Activated T-helper 1 cell treated with anti-CD3 and anti-CD28 coated beads, Interleukin-12 subunit alpha, Interleukin-12 subunit beta, Interleukin-2, Interleukin-4 antibody, amounts not matched to agents 30 ng/mL and 10 ng/mL and 1 ng/mL, durations not matched to agents 14 hours and 24 hours and 36 hours (primary cell): ENCODE measurements at regions of chr14 and their contacts with region 1.

Region 1: GRCh38 chr14:57066887-57067513 is 201.7 kb downstream of the EXOC5 start:
- DNase-seq: no peak
- H3K4me3 Mint-ChIP-seq: no peak overlapping the region
- H3K27ac Mint-ChIP-seq: no peak overlapping the region
- H3K4me1 Mint-ChIP-seq: peaks cover 7% of the 10 kb centered on the region
- H3K27me3 Mint-ChIP-seq: peaks cover 55% of the 10 kb centered on the region

Region 2: GRCh38 chr14:56129933-56130332 is 937.1 kb before region 1 on chr14:
- intact Hi-C with region 1: loop called (anchors 10 kb)
- DNase-seq: no peak
- H3K4me3 Mint-ChIP-seq: no peak overlapping the region
- H3K27ac Mint-ChIP-seq: no peak overlapping the region
- H3K4me1 Mint-ChIP-seq: peaks cover 19% of the 10 kb centered on the region
- H3K27me3 Mint-ChIP-seq: peaks cover under 1% of the 10 kb centered on the region

Region 3: GRCh38 chr14:56491299-56492285 is 575.4 kb before region 1 on chr14:
- intact Hi-C with region 1: loop called (anchors 1 kb)
- DNase-seq: peak; percentile 2
- H3K4me3 Mint-ChIP-seq: no peak overlapping the region
- H3K27ac Mint-ChIP-seq: no peak overlapping the region
- H3K4me1 Mint-ChIP-seq: peaks cover 7% of the 10 kb centered on the region
- H3K27me3 Mint-ChIP-seq: no peaks in the 10 kb centered on the region

Region 4: GRCh38 chr14:56810836-56811592 is 256.0 kb before region 1 on chr14:
- intact Hi-C with region 1: loop called (anchors 5 kb)
- DNase-seq: no peak
- H3K4me3 Mint-ChIP-seq: no peak overlapping the region
- H3K27ac Mint-ChIP-seq: peak overlapping the region; percentile 84
- H3K4me1 Mint-ChIP-seq: peaks cover 17% of the 10 kb centered on the region
- H3K27me3 Mint-ChIP-seq: peaks cover 80% of the 10 kb centered on the region

Region 5: GRCh38 chr14:57078054-57078453 is 11.1 kb after region 1 on chr14:
- intact Hi-C with region 1: no loop called
- DNase-seq: no peak
- H3K4me3 Mint-ChIP-seq: no peak overlapping the region
- H3K27ac Mint-ChIP-seq: no peak overlapping the region
- H3K4me1 Mint-ChIP-seq: no peaks in the 10 kb centered on the region
- H3K27me3 Mint-ChIP-seq: peaks cover 20% of the 10 kb centered on the region

Region 6: DNA sequence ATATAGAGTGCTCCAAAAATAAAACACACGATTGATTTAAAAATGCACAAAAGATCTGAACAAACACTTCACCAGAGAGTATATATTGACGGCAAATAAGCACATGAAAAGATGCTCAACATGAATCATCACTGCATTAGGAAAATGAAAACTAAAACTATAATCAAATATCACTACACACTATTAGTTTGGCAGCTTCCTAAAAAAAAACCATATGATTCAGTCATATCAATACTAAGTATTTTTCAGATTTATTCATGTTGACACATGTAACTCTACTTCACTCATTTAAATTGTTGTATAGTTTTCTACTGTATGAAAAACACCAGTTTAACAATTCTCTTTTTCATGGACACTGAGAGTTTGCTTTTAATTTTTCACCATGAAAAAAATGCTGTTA is 160.1 kb after region 1 on chr14:
- intact Hi-C with region 1: no loop called
- DNase-seq: no peak
- H3K4me3 Mint-ChIP-seq: no peak overlapping the region
- H3K27ac Mint-ChIP-seq: no peak overlapping the region
- H3K4me1 Mint-ChIP-seq: peaks cover 3% of the 10 kb centered on the region
- H3K27me3 Mint-ChIP-seq: no peaks in the 10 kb centered on the region